HepG2 (cell line): ENCODE measurements at regions of chr17 and their contacts with region 1.

Region 1: DNA sequence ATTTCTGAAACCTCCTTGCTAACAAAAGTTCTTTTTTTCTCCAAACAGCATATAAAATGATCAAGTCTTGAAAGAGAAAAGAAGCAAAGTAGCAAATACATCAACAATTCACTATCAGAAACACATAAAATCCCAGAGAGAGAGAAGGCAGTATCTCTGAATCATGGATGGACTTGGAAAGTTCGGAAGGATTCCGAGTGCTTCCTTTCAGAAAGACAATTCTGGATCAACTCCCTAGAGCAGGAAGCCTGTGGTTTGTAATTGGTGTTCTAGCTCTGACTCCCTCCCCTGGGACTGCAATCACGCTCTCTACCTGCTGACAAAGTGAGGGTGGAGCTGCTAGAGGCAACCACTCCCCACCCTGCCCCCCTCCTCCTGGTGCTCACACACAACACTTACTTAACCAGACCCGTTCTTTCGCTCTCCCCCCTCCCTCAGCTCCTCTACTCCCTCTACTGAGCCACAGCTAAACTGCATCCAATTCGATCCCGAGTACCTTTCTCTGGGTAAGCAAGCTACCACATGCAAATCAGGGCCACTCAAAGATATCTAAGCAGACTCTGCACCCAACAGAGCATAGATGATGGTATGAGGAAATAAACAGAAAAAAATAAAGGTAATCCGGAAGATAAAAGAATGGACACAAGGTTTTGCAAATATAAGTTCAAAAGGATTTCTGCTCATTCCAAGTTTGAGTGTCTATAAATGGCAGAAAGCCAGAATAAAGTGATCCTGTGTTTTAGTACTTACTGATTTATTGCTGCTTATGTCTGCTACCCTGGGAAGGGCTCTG is at the start of gene RNF43:
- DNase-seq: peak; percentile 99
- ATAC-seq: peak; percentile 97
- H3K4me3 ChIP-seq: peak within 1 kb of the TSS; percentile 73 to 88 (median 81)
- H3K27ac ChIP-seq: peak within 1 kb of the TSS; percentile 77
- H3K4me1 ChIP-seq: peaks cover 15% of the 10 kb centered on the region
- H3K27me3 ChIP-seq: peaks cover 0 to 14% of the 10 kb centered on the region in 2 experiments; a peak in 3 of 5 replicates
- CTCF ChIP-seq: peak; percentile 99
- EP300 ChIP-seq: peak; percentile 73 to 78; a peak in 3 of 4 replicates
- POLR2A ChIP-seq: peak; percentile 96 to 98
- RAD21 ChIP-seq: peak; percentile 97
- total RNA-seq, gene RNF43: 51.4 and 53.4 TPM in 2 replicates

Region 2: DNA sequence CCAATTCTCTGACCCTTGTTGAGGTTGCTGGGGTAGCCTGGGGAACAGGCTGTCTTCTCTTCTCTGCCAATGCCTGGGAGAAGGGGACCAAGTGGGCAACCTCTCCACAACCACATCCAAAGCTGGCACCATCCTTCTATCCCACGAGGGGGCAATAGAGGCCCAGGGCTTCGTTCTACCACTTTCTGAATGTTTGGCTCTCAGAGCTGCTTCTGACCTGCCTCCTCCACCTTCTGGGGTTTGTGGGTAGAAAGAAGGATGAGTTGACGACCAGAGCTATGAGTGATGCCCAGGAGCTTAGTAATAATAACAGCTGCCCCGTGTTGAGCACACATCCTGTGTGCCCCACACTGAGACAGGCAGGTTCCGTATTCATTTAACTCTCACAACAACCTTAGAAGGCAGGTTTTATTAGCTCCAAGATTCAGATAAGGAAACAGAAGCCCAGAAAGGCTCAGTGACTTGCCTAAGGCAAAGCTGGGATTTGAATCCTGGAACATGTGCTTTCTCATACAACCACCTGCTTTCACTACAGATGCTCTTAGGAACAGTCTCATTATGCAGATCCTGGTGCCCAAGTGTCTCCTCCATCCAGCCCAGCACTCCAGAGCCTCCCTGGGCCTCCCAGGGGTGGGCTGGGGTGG is 100.0 kb before region 1 on chr17:
- CTCF ChIA-PET with region 1: interaction called, 20 read pairs
- POLR2A ChIA-PET with region 1: interaction called, 35 read pairs
- in situ Hi-C with region 1: no loop called
- intact Hi-C with region 1: loop called (anchors 1 kb)
- DNase-seq: peak; percentile 75
- ATAC-seq: peak; percentile 84
- H3K4me3 ChIP-seq: no peak overlapping the region
- H3K27ac ChIP-seq: no peak overlapping the region
- H3K4me1 ChIP-seq: peaks cover 19% of the 10 kb centered on the region; the same call in 1 of the 2 replicates
- H3K27me3 ChIP-seq: peaks cover 17 to 68% of the 10 kb centered on the region in 2 experiments
- CTCF ChIP-seq: peak; percentile 99
- EP300 ChIP-seq: no peak
- POLR2A ChIP-seq: no peak
- RAD21 ChIP-seq: peak; percentile 96

Region 3: GRCh38 chr17:58344047-58344790 is 73.3 kb before region 1 on chr17:
- CTCF ChIA-PET with region 1: no interaction called
- POLR2A ChIA-PET with region 1: interaction called, 254 read pairs
- in situ Hi-C with region 1: no loop called
- intact Hi-C with region 1: no loop called
- DNase-seq: no peak
- ATAC-seq: peak; percentile 10
- H3K4me3 ChIP-seq: no peak overlapping the region
- H3K27ac ChIP-seq: no peak overlapping the region
- H3K4me1 ChIP-seq: peaks cover 5% of the 10 kb centered on the region
- H3K27me3 ChIP-seq: no peaks in the 10 kb centered on the region
- CTCF ChIP-seq: no peak
- EP300 ChIP-seq: no peak
- POLR2A ChIP-seq: peak; percentile 18 to 39; a peak in 3 of 4 replicates
- RAD21 ChIP-seq: no peak

Region 4: GRCh38 chr17:58369214-58370031 is 48.1 kb before region 1 on chr17:
- CTCF ChIA-PET with region 1: no interaction called
- POLR2A ChIA-PET with region 1: interaction called, 244 read pairs
- in situ Hi-C with region 1: loop called (anchors 5 kb)
- intact Hi-C with region 1: loop called (anchors 1 kb)
- DNase-seq: peak; percentile 97
- ATAC-seq: peak; percentile 93
- H3K4me3 ChIP-seq: peak overlapping the region in 2 of 3 experiments; percentile 1 to 47; a peak in 3 of 6 replicates
- H3K27ac ChIP-seq: peak overlapping the region; percentile 92
- H3K4me1 ChIP-seq: peaks cover 97% of the 10 kb centered on the region
- H3K27me3 ChIP-seq: no peaks in the 10 kb centered on the region
- CTCF ChIP-seq: no peak
- EP300 ChIP-seq: peak in 1 of 2 experiments; percentile 58; a peak in 2 of 4 replicates
- POLR2A ChIP-seq: peak; percentile 12 to 31; a peak in 2 of 4 replicates
- RAD21 ChIP-seq: peak; percentile 35

Region 5: DNA sequence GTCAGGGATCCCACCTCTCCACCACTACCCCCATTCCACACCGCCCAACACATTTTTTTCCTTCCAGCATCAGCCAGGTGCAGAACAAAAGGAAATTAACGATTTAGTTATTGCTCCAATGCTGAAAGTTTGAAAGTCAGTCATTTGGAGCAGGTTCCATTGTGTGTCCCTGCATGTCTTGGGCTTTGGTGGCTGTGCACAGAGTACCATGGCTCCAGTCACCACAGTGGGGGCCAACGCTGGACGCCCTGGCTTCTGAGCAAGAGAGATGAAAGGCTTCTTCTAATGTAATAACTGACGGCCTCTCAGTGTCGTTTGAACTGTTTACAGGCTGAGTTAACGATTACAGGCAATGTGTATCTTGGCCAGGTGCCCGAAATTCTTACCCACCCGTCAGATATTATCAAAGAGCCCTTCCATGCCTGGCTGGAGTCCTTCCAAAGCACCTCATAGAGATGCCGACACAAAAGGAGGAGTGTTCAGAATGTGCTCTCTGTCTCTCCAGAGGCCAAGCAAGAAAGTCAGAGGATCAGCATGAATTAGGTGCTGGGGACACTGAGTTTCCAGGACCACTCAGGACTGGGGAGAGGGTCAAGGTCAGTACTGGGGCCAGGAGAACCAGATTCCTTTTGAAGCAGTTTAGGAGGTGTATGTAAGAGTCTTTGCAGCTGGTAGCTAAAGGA is 26.1 kb before region 1 on chr17:
- CTCF ChIA-PET with region 1: interaction called, 4 read pairs
- POLR2A ChIA-PET with region 1: interaction called, 100 read pairs
- in situ Hi-C with region 1: no loop called
- intact Hi-C with region 1: loop called (anchors 1 kb)
- DNase-seq: peak; percentile 100
- ATAC-seq: peak; percentile 96
- H3K4me3 ChIP-seq: peak overlapping the region in 2 of 3 experiments; percentile 8 to 36; a peak in 1 of 6 replicates
- H3K27ac ChIP-seq: peak overlapping the region; percentile 93
- H3K4me1 ChIP-seq: peaks cover 97% of the 10 kb centered on the region
- H3K27me3 ChIP-seq: no peaks in the 10 kb centered on the region
- CTCF ChIP-seq: peak; percentile 24; the same call in 1 of the 2 replicates
- EP300 ChIP-seq: peak; percentile 99 to 100
- POLR2A ChIP-seq: peak; percentile 86 to 95
- RAD21 ChIP-seq: peak; percentile 66; the same call in 1 of the 2 replicates